ENCODE measurements at regions of chr6 and their contacts with region 1.

Region 1: GRCh38 chr6:39102071-39102820 is 12.7 kb downstream of the SAYSD1 start:
- DNase-seq: peak; percentile 36
- ATAC-seq: peak; percentile 30 to 77

Region 2: GRCh38 chr6:38973178-38974054 is 128.8 kb before region 1 on chr6:
- intact Hi-C with region 1: loop called in 1 of 2 experiments (anchors 10 kb)
- DNase-seq: no peak
- ATAC-seq: peak; percentile 31 to 77

Region 3: GRCh38 chr6:38997128-38997761 is 105.0 kb before region 1 on chr6:
- intact Hi-C with region 1: loop called in 1 of 2 experiments (anchors 5 kb)
- DNase-seq: peak; percentile 28
- ATAC-seq: peak; percentile 50 to 70

Measured in left cardiac atrium (tissue), 4 donors.